Keratinocyte (primary cell): ENCODE measurements at regions of chr9 and their contacts with region 1.

Region 1: DNA sequence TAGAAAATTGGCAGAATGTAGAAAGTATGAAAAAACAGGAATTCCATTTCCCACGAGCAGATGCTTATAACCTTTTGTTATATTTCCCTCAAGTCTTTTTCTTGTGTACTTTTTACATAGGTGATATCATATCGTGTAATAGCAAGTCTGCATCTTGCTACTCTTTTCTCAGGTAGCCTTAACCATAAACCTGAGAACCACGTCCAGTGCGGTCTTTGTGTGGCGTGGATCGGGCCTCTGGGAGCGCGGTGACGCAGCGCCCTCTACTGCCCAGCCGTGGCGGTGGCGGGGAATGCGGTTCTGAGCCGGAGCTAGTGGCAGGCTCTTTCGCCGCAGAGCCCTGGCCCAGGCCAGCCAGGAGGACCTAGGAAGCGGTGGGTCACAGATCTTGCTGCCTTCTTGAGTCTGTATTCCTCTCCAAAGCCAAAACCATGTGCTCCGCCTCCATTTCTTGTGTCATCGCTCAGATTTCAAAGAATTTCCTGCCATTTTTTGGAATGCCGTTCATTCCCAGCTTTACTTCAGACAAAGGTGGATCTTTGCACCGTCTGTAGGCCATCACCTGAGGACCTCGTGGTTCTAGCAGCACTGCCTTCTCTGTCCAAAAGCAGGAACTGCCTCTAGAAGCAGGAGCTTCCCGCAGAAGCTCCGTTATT is 71.9 kb downstream of the MVB12B start:
- DNase-seq: no peak
- H3K4me3 ChIP-seq: no peak overlapping the region
- H3K27ac ChIP-seq: no peak overlapping the region
- H3K4me1 ChIP-seq: peaks cover 12% of the 10 kb centered on the region
- H3K27me3 ChIP-seq: no peaks in the 10 kb centered on the region
- CTCF ChIP-seq: peak; percentile 98 to 99 (median 98)

Region 2: GRCh38 chr9:126198854-126199253 is 199.7 kb before region 1 on chr9:
- dilution Hi-C with region 1: no loop called
- DNase-seq: no peak
- H3K4me3 ChIP-seq: no peak overlapping the region
- H3K27ac ChIP-seq: no peak overlapping the region
- H3K4me1 ChIP-seq: no peaks in the 10 kb centered on the region
- H3K27me3 ChIP-seq: peaks cover 8% of the 10 kb centered on the region
- CTCF ChIP-seq: no peak

Region 3: DNA sequence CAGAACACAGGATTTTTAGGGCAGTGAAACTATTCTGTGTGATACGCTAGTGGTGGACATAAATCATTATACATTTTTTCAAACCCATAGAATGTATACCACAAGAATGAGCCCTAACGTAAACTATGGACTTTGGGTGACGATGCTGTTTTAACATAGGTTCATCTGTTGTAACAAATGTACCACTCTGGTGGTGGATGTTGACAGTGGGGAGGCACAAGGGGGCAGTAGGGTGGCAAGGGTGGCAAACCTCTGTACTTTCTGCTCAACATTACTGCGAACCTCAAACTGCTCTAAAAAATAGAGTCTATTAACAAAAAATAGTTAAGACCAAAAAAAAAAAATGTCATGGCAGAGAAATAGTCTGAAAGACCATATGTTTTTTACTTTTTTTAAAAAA is 81.0 kb before region 1 on chr9:
- dilution Hi-C with region 1: loop called (anchors 5 kb)
- DNase-seq: no peak
- H3K4me3 ChIP-seq: no peak overlapping the region
- H3K27ac ChIP-seq: no peak overlapping the region
- H3K4me1 ChIP-seq: no peaks in the 10 kb centered on the region
- H3K27me3 ChIP-seq: no peaks in the 10 kb centered on the region
- CTCF ChIP-seq: peak; percentile 25 to 74 (median 28)